Ascending aorta (tissue), 2 donors: ENCODE measurements at regions of chr11 and their contacts with region 1.

Region 1: GRCh38 chr11:36265793-36266628 is 23.2 kb downstream of the COMMD9 start:
- DNase-seq: no peak
- H3K4me3 ChIP-seq: no peak overlapping the region
- H3K27ac ChIP-seq: no peak overlapping the region
- H3K4me1 ChIP-seq: no peaks in the 10 kb centered on the region
- H3K27me3 ChIP-seq: no peaks in the 10 kb centered on the region
- CTCF ChIP-seq: peak; percentile 55 to 77 (median 67)

Region 2: GRCh38 chr11:35822815-35823495 is 443.1 kb before region 1 on chr11:
- intact Hi-C with region 1: loop called (anchors 2 kb)
- DNase-seq: no peak
- H3K4me3 ChIP-seq: no peak overlapping the region
- H3K27ac ChIP-seq: no peak overlapping the region
- H3K4me1 ChIP-seq: no peaks in the 10 kb centered on the region
- H3K27me3 ChIP-seq: no peaks in the 10 kb centered on the region
- CTCF ChIP-seq: no peak

Region 3: DNA sequence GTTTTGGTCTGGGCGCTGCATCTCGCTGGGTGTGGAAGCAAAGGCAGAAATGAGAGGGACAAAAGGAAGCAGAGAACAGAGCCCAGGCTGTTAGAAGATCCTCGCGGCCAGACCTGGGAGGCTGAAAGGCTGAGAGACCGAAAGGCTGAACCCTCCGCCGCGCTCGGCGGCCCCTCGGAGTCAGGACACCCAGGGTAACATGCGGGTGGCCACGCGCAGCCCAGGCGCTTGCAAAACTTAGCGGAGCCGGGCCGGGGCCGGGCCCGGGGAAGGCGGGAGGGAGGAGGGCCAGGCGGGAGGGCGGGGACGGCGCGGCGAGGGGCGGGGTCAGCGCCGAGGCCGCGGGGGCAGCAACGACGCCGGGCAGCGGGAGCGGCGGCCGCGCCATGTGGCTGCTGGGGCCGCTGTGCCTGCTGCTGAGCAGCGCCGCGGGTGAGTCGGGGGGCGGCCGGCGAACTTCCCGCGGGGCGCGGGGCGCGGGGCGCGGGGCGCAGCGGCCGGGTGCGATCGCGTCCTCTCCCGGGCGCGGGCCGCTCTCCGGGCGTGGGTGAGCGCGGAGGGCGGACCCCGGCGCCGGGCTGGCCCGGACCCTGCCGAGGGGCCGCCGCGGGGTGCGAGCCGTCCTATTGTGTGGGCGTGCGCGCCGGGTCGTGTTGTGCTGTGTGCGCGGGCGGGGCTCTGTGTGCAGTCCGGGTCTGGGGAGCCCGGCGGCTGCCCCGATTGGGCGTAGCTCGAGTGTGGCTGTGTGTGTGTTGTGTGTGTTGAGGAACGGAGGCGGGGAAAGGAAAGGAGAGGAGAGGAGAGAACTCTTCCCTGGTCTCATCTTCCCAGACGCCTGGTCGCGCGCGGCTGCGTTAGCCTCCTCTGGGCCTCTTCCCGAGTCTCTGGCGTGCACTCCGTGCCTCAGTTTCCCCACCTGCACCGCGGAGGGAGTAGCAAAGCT is 322.0 kb before region 1 on chr11 and contains the start of gene LDLRAD3:
- intact Hi-C with region 1: loop called (anchors 10 kb)
- DNase-seq: peak in 1 of 2 donors; percentile 82
- H3K4me3 ChIP-seq: peak within 1 kb of the TSS; percentile 73 to 82
- H3K27ac ChIP-seq: peak within 1 kb of the TSS; percentile 38 to 43
- H3K4me1 ChIP-seq: peaks cover 0 to 3% of the 10 kb centered on the region in 2 donors
- H3K27me3 ChIP-seq: no peaks in the 10 kb centered on the region
- CTCF ChIP-seq: no peak
- total RNA-seq, gene LDLRAD3: 21.6 TPM

Region 4: DNA sequence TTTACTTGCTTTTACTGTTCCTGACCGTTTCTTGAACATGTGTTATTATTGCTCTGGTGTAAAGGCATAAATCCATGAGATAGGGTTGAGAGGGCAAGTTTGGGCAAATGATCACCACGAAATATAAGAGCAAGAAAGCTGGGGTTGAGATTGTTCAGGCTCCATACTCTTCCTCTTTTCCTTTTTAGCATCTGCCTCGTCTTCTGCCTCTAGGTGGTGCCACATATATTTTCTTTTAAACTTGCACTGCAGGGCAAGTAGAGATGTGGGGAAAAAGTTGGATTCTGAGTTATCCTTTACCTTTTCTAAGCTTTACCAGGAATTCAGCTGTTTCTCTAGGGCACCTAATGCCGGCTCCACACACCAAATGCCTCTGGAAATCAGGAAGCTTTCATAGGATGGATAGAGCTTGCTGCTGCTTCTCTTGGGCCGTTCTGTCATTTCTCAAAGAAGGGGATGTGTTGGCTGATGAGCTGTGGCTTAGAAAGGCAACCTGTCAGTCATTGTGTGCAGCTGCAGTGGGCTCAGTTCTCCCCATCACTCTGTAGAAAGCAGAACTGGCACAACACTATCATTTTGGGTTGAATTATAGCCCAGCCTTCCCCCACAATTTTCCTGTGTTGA is 223.9 kb before region 1 on chr11:
- intact Hi-C with region 1: loop called (anchors 10 kb)
- DNase-seq: no peak
- H3K4me3 ChIP-seq: no peak overlapping the region
- H3K27ac ChIP-seq: no peak overlapping the region
- H3K4me1 ChIP-seq: no peaks in the 10 kb centered on the region
- H3K27me3 ChIP-seq: no peaks in the 10 kb centered on the region
- CTCF ChIP-seq: peak in 1 of 3 experiments; percentile 31

Region 5: GRCh38 chr11:36289226-36289852 is 23.3 kb after region 1 on chr11 and contains the start of gene COMMD9:
- intact Hi-C with region 1: no loop called
- DNase-seq: peak; percentile 86 to 97
- H3K4me3 ChIP-seq: peak within 1 kb of the TSS; percentile 51 to 69
- H3K27ac ChIP-seq: no peak within 1 kb of the TSS
- H3K4me1 ChIP-seq: peaks cover 5 to 8% of the 10 kb centered on the region in 2 donors
- H3K27me3 ChIP-seq: no peaks in the 10 kb centered on the region
- CTCF ChIP-seq: no peak
- total RNA-seq, gene COMMD9: 69.2 TPM